Ascending aorta (tissue), 2 donors: ENCODE measurements at regions of chr2 and their contacts with region 1.

Region 1: GRCh38 chr2:23926750-23927571 is at the start of gene ATAD2B:
- DNase-seq: peak; percentile 54 to 94
- H3K4me3 ChIP-seq: peak within 1 kb of the TSS; percentile 90
- H3K27ac ChIP-seq: peak within 1 kb of the TSS; percentile 99
- H3K4me1 ChIP-seq: peaks cover 0 to 20% of the 10 kb centered on the region in 2 donors
- H3K27me3 ChIP-seq: no peaks in the 10 kb centered on the region
- CTCF ChIP-seq: peak; percentile 66 to 85 (median 82)
- total RNA-seq, gene ATAD2B: 8.4 TPM

Region 2: DNA sequence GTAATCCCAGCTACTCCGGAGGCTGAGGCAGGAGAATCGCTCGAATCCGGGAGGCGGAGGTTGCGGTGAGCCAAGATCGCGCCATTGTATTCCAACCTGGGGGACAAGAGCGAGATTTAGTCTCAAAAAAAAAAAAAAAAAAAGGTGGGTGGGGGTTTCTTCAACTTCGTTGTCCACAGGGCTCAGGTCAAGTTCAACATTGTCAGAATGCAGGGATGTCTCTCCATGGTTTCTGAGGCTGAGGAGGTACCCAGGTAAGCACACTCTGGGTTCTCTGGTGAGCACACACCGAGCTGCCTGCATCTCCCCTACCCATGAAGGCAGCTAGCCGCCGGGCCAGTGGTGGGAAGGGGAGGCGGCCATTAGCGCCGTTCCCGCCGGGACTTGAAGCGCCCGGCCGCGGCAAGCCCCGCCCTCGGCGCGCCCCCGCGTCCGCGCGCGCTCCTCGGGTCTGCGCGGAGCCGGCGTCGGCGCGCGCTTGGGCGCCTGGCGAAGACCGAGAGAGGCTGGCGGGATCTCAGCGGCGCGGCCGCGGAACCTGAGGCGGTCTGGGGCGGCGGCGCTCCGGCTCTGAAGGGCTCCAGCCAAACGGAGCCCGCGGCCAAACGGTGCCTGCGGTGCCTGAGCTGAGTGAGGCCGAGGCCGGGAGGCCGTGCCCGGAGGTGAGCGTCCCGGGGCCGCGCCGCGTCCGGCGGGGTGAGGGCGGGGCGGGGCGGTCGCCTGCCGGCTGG is 13.2 kb after region 1 on chr2 and contains the start of gene UBXN2A:
- intact Hi-C with region 1: loop called (anchors 1 kb)
- DNase-seq: peak; percentile 9 to 85
- H3K4me3 ChIP-seq: peak within 1 kb of the TSS; percentile 92 to 98
- H3K27ac ChIP-seq: peak within 1 kb of the TSS; percentile 83 to 94
- H3K4me1 ChIP-seq: peaks cover 0 to 3% of the 10 kb centered on the region in 2 donors
- H3K27me3 ChIP-seq: no peaks in the 10 kb centered on the region
- CTCF ChIP-seq: no peak
- total RNA-seq, gene UBXN2A: 3.0 TPM

Region 3: GRCh38 chr2:24075915-24076848 is 149.2 kb after region 1 on chr2 and contains the start of gene SF3B6:
- intact Hi-C with region 1: loop called (anchors 1 kb)
- DNase-seq: peak; percentile 98 to 99
- H3K4me3 ChIP-seq: peak within 1 kb of the TSS; percentile 57 to 79
- H3K27ac ChIP-seq: peak within 1 kb of the TSS; percentile 92 to 94
- H3K4me1 ChIP-seq: peaks cover 2 to 4% of the 10 kb centered on the region in 2 donors
- H3K27me3 ChIP-seq: no peaks in the 10 kb centered on the region
- CTCF ChIP-seq: no peak
- total RNA-seq, gene SF3B6: 26.9 TPM

Region 4: DNA sequence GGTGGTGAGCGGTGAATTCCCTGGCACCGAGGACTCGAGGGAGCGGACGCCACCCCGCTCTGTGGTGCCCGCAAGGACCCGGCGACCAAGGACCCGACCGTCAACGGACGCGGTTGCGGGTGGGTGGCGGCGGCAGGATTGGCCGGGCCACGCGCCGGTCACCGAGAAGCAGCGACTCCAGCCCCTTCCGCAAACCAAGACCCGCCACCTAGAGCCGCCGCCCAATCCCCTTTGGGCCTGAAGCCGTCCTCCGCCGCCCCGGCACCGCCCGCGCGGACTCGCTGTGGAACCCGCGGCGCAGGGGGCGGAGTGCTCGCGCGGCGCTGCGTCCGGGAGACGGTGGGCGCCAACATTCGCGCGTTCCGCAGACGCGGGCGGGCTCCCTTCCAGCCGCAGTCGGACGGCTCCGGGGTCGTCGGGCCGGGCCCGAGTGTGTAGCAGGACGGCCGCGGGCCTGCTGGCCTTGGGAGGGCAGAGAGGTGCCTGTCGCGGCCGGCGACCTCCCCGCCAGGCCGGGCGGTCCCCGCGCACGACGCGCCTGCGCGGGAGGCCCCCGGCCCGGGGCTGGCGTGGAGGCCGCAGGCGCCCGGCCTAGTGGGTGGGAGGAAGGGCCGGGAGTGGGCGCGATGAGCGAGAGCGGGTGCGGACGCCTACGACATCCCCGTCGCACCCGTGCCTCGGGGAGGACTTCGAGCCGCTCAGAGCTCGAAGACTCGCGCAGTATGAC is 196.4 kb after region 1 on chr2 and contains the starts of genes FAM228B and PFN4:
- intact Hi-C with region 1: loop called (anchors 1 kb)
- DNase-seq: peak; percentile 61 to 94
- H3K4me3 ChIP-seq: peak within 1 kb of the TSS; percentile 79 to 88
- H3K27ac ChIP-seq: peak within 1 kb of the TSS; percentile 92 to 95
- H3K4me1 ChIP-seq: peaks cover 0 to 8% of the 10 kb centered on the region in 2 donors
- H3K27me3 ChIP-seq: no peaks in the 10 kb centered on the region
- CTCF ChIP-seq: no peak
- total RNA-seq, gene FAM228B: 144 TPM
- total RNA-seq, gene PFN4: not detected